Cardiac septum (tissue), 1 donor: ENCODE measurements at regions of chr4 and their contacts with region 1.

Region 1: DNA sequence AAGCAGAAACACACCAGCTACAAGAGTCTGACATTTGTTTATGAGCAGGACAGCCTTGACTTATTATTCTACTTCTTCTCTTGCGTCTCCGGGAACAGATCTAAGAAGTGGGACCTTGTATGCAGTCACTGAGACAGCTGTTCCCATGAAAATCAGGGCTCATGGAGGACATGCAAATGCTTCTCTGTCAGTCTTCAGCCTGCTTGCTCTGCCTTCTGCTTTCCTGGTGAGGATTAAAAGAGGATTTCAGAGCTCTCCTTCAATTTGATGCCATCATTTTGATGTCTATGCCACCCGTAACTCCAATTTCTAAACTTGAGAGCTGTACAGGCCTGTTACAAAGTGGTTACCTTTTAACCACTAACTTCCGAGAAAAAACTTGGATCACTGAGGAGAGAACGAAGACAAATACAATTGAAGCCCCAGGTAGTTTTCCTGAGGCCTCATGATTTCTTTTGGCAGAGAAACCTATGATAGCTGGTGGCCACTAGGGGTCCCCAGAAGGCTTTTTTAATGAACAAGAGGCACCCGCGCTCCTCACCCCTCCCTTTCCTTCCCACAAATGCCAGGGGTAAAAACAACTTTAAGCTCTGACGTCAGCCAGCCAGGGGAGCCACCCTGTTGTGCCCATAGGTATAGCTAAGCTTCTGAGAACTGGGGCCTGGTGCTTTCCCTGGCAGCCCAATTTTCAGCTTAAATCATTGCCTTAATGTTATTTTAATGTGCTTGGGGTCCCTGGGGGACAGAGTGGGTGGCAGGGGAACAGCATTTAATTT is 97.0 kb downstream of the DDIT4L start:
- DNase-seq: peak; percentile 77

Region 2: DNA sequence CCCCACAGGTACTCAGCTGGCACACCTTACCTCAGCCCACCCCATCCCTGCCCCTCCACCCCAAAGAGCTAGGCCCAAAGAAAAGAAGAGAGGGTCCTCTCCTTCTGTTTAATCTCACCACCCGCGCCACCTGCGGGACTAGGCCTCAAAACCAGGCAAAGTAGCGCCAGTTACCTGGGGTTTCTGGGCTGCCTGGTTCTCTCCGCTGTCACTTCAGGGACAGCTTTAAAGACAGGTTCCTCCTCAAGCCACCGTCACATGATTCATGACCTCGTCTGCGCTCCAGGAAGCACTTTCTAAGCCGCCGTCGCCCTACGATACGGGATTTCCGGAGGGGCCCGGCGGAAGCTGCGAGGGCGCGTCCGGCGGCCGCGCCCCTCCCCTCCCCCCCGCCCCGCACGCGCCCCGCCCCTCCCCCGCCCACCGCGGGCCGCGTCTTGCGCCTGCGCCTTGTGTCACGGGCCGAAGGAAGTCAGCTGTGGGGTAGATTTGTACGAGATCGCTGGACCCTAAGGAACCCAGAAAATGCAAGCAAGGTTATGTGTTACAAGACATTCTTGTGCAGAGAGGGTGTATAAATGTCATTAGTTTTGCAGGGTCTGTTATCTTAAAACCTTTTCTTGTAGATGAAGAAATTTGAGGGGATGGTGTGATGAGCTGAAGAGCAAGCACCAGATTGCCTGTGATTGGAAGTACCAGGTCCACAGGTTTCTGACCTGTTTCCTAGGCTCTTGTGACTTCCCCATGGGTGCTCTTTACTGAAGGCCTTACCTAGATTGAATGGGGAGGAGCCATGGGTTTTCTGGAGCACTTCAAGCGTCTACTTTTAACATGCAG is 198.9 kb before region 1 on chr4 and contains the start of gene LAMTOR3:
- intact Hi-C with region 1: no loop called
- DNase-seq: peak; percentile 96
- total RNA-seq, gene LAMTOR3: 26.4 TPM

Region 3: DNA sequence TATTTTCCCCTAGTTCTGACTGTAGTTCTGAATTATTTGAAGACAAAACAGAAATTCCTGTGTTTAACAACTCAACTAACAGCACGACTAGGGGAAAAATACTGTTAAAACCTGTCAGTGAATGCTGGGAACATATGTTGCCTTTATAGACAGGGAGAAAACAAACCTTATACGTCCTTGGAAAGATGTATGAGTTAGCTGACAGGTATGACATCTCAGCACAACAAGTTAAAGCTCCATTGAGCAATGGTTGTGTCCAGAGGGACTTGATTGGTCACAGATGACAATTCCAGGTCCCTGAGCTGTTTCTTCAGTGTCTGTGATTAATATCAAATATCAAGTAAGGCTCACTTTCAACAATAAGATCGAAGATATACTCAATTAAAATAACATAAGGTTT is 155.2 kb after region 1 on chr4:
- intact Hi-C with region 1: no loop called
- DNase-seq: no peak

Region 4: GRCh38 chr4:100299046-100299840 is 206.0 kb after region 1 on chr4:
- intact Hi-C with region 1: loop called (anchors 2 kb)
- DNase-seq: no peak

Region 5: DNA sequence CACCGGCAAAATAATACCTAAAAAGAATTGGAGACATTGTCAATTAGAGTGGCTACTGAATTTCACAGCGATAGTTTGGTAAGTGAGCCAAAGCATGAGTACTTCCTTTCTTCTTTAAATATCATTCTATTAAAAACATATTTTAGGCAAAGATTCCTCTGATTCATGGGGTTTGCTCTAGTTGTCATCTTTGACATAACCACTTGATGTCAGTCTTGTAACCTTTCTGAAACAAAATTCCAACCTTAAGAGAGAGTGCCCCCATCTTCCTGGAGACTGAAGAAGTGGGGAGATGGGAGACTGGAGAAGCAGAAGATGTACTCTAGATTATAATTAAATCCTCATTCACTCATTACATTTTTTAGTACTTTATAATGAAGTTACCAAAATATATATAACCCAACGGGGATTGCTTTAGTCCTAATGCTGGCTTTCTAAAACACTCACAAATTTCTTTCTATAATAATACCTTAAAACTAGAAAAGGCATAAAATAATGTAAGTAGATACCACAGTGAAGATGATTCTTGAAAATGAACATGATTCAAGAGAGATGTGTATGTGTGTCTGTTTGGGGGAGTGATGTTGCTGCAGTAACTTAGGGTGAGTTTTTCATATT is 328.2 kb after region 1 on chr4:
- intact Hi-C with region 1: loop called (anchors 10 kb)
- DNase-seq: no peak

Region 6: GRCh38 chr4:100462206-100462605 is 368.9 kb after region 1 on chr4:
- intact Hi-C with region 1: no loop called
- DNase-seq: no peak